Posterior cingulate gyrus (tissue), 11 donors: ENCODE measurements at regions of chr19 and their contacts with region 1.

Region 1: GRCh38 chr19:1652471-1653299 is at the start of gene TCF3:
- DNase-seq: peak; percentile 93 to 100 (median 98)

Region 2: GRCh38 chr19:1568320-1569019 is 84.2 kb before region 1 on chr19 and contains the start of gene MEX3D:
- intact Hi-C with region 1: loop called (anchors 5 kb)
- DNase-seq: peak in 9 of 10 donors; percentile 29 to 94 (median 60)

Region 3: DNA sequence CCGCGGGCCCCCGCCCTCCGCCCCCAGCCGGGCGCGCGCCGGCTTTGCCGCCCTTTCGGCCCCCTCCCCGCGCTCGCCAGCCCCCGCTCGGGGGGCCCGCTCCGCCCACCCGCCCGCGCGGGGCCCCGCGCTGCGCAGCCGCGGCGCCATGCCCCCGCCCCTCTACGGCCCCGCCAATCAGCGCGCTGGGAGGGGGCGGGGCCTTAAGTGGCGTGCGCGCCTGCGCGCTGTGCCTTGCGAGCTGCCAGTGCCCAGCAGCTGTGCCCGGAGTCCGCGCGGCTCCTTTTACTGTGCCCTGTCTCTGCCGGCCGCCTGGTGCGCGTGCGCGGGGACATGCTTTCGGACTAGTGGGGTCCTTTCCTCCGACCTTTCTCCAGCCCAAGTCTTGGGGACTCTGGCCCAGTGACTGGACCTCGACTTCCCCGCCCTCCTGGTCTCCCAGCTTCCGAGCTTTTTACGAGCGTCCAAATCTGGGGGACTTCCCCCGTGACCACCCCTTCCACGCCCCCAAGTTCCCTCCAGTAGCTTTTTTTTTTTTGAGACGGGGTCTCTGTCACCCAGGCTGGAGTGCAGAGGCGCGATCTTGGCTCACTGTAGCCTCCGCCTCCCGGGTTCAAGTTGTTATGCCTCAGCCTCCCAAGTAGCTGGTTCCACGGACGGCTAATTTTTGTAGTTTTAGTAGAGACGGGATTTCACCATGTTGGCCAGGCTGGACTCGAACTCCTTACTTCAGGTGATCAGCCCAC is 59.8 kb before region 1 on chr19 and contains the start of gene MBD3:
- intact Hi-C with region 1: loop called (anchors 2 kb)
- DNase-seq: peak; percentile 85 to 99 (median 94)